ENCODE measurements at regions of chr1 and their contacts with region 1.

Region 1: GRCh38 chr1:234309598-234310459 is 63.4 kb upstream of the COA6 start:
- DNase-seq: no peak
- H3K4me3 ChIP-seq: no peak overlapping the region
- H3K27ac ChIP-seq: no peak overlapping the region
- H3K27me3 ChIP-seq: no peaks in the 10 kb centered on the region
- CTCF ChIP-seq: peak; percentile 94

Region 2: DNA sequence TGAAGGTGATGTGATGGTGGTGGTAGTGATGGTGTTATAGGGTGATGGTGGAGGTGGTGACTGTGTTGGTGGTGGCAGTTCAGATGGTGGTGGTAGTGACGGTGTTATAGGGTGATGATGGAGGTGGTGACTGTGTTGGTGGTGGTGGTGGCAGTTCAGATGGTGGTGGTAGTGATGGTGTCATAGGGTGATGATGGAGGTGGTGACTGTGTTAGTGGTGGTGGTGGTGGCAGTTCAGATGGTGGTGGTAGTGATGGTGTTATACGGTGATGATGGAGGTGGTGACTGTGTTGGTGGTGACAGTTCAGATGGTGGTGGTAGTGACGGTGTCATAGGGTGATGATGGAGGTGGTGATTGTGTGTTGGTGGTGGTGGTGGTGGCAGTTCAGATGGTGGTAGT is 211.9 kb before region 1 on chr1:
- CTCF ChIA-PET with region 1: no interaction called
- POLR2A ChIA-PET with region 1: no interaction called
- DNase-seq: no peak
- H3K4me3 ChIP-seq: no peak overlapping the region
- H3K27ac ChIP-seq: no peak overlapping the region
- H3K27me3 ChIP-seq: no peaks in the 10 kb centered on the region
- CTCF ChIP-seq: no peak

Region 3: GRCh38 chr1:234114648-234115307 is 195.1 kb before region 1 on chr1:
- CTCF ChIA-PET with region 1: interaction called, 58 read pairs
- POLR2A ChIA-PET with region 1: no interaction called
- DNase-seq: peak; percentile 24
- H3K4me3 ChIP-seq: 0 out of 2 replicates have a peak overlapping the region, but pooled peaks have one; percentile 10
- H3K27ac ChIP-seq: no peak overlapping the region
- H3K27me3 ChIP-seq: peaks cover 4% of the 10 kb centered on the region
- CTCF ChIP-seq: peak; percentile 72

Region 4: GRCh38 chr1:234125283-234125682 is 184.5 kb before region 1 on chr1:
- CTCF ChIA-PET with region 1: interaction called, 23 read pairs
- POLR2A ChIA-PET with region 1: no interaction called
- DNase-seq: no peak
- H3K4me3 ChIP-seq: no peak overlapping the region
- H3K27ac ChIP-seq: no peak overlapping the region
- H3K27me3 ChIP-seq: no peaks in the 10 kb centered on the region
- CTCF ChIP-seq: no peak

Region 5: GRCh38 chr1:234286206-234286605 is 23.6 kb before region 1 on chr1:
- CTCF ChIA-PET with region 1: interaction called, 13 read pairs
- POLR2A ChIA-PET with region 1: no interaction called
- DNase-seq: no peak
- H3K4me3 ChIP-seq: no peak overlapping the region
- H3K27ac ChIP-seq: no peak overlapping the region
- H3K27me3 ChIP-seq: peaks cover 3% of the 10 kb centered on the region
- CTCF ChIP-seq: no peak

Region 6: GRCh38 chr1:234295068-234295467 is 14.8 kb before region 1 on chr1:
- CTCF ChIA-PET with region 1: interaction called, 22 read pairs
- POLR2A ChIA-PET with region 1: no interaction called
- DNase-seq: no peak
- H3K4me3 ChIP-seq: no peak overlapping the region
- H3K27ac ChIP-seq: no peak overlapping the region
- H3K27me3 ChIP-seq: no peaks in the 10 kb centered on the region
- CTCF ChIP-seq: no peak

Region 7: GRCh38 chr1:234326497-234327366 is 16.9 kb after region 1 on chr1:
- CTCF ChIA-PET with region 1: interaction called, 47 read pairs
- POLR2A ChIA-PET with region 1: no interaction called
- DNase-seq: no peak
- H3K4me3 ChIP-seq: peak overlapping the region; percentile 59
- H3K27ac ChIP-seq: no peak overlapping the region
- H3K27me3 ChIP-seq: peaks cover 13% of the 10 kb centered on the region
- CTCF ChIP-seq: peak; percentile 81

Measured in AG04450 (cell line).